Activated B cell treated with CpG ODN at 0.5 μM for 24 hours (primary cell): ENCODE measurements at regions of chr11 and their contacts with region 1.

Region 1: DNA sequence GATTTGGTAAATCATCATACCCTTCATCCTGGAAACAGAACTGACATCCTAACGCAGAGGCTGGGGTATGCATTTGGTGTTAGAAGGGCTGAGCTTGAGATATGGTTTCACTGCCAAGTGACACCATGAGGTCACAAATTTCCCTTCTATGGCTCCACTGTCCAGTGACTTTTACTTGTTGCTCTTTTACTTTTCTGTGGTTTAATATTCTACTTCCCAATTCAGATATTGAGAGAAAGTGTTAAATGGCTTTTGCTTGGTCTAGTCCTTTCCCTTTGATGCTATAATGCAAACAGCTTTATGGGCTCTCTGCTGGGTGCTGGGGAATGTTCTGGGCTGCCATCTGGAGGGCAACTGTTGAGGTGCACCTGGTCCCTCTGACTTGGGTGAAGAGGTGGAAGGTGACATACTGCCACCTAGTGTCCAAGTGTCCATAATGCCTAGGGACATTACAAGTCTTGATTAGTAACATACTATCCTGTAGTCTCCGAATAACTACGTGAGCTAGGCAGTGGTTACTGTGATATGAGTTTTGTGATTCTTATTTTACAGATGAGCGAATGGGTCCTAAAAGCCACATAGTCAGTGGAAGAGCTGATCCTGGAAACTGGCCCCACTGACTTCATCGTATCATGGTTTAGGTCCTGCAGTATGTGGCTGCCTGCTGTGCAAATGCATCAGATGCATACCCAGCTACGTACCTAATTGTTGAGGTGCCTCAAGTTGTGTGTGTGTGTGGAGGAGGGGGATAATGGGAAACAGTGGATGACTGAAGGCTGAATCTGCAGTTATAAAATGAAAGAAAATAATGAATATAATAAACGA is 149.1 kb upstream of the RAG2 start:
- DNase-seq: peak; percentile 34
- ATAC-seq: peak; percentile 100
- H3K4me3 Mint-ChIP-seq: no peak overlapping the region
- H3K27ac Mint-ChIP-seq: no peak overlapping the region
- H3K4me1 Mint-ChIP-seq: peaks cover 5% of the 10 kb centered on the region
- H3K27me3 Mint-ChIP-seq: peaks cover 10% of the 10 kb centered on the region
- CTCF ChIP-seq: peak; percentile 91

Region 2: GRCh38 chr11:36509694-36510566 is 237.2 kb before region 1 on chr11 and contains the start of gene TRAF6:
- CTCF ChIA-PET with region 1: interaction called, 4 read pairs
- POLR2A ChIA-PET with region 1: no interaction called
- intact Hi-C with region 1: loop called (anchors 1 kb)
- DNase-seq: peak; percentile 92
- ATAC-seq: peak; percentile 95
- H3K4me3 Mint-ChIP-seq: peak within 1 kb of the TSS; percentile 97
- H3K27ac Mint-ChIP-seq: peak within 1 kb of the TSS; percentile 91
- H3K4me1 Mint-ChIP-seq: peaks cover 19% of the 10 kb centered on the region
- H3K27me3 Mint-ChIP-seq: peaks cover 9% of the 10 kb centered on the region
- CTCF ChIP-seq: peak; percentile 72
- total RNA-seq, gene TRAF6: 16.9 and 19.3 TPM in 2 replicates

Region 3: GRCh38 chr11:36564376-36565030 is 182.6 kb before region 1 on chr11:
- CTCF ChIA-PET with region 1: interaction called, 27 read pairs
- POLR2A ChIA-PET with region 1: no interaction called
- intact Hi-C with region 1: loop called (anchors 1 kb)
- DNase-seq: no peak
- ATAC-seq: no peak
- H3K4me3 Mint-ChIP-seq: peak overlapping the region; percentile 57
- H3K27ac Mint-ChIP-seq: no peak overlapping the region
- H3K4me1 Mint-ChIP-seq: peaks cover 6% of the 10 kb centered on the region
- H3K27me3 Mint-ChIP-seq: peaks cover 41% of the 10 kb centered on the region
- CTCF ChIP-seq: no peak

Region 4: GRCh38 chr11:36619502-36619901 is 127.6 kb before region 1 on chr11:
- CTCF ChIA-PET with region 1: no interaction called
- POLR2A ChIA-PET with region 1: no interaction called
- intact Hi-C with region 1: no loop called
- DNase-seq: no peak
- ATAC-seq: no peak
- H3K4me3 Mint-ChIP-seq: no peak overlapping the region
- H3K27ac Mint-ChIP-seq: no peak overlapping the region
- H3K4me1 Mint-ChIP-seq: peaks cover 11% of the 10 kb centered on the region
- H3K27me3 Mint-ChIP-seq: peaks cover 17% of the 10 kb centered on the region
- CTCF ChIP-seq: no peak

Region 5: DNA sequence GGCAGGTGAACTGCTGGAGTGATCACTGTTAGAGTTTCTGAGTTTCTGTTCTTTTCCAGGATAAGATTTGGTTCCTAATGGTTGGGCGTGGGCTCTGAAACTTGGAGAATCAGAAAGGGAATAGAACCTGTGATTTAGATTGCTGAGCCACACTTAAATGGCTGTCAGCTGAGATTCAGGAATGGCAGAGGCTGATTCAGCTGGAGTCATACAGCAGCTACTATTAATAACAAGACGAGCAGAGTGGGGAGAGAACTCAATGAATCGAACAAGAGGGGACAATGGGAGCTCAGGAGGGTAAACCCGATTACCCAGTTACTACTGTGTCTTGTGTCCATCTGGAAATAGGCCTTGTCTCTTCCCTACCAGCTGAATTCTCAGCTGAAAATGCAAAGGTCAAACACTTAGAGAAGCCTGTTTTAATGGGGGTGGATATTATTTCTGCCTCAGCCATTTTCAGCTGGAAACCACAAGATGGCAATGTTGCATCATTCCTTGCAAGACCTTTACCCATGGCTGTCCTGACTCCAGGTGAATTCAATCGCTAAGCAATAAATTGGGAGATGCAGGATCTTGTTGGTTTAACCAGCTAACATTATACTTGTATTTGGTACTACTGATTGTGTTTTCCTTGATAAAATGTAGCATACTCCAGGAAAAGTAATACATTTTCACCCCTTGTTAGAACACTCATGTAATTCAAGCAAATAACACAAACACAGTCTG is 44.6 kb before region 1 on chr11:
- CTCF ChIA-PET with region 1: interaction called, 46 read pairs
- POLR2A ChIA-PET with region 1: no interaction called
- intact Hi-C with region 1: loop called (anchors 1 kb)
- DNase-seq: no peak
- ATAC-seq: peak; percentile 21
- H3K4me3 Mint-ChIP-seq: no peak overlapping the region
- H3K27ac Mint-ChIP-seq: no peak overlapping the region
- H3K4me1 Mint-ChIP-seq: no peaks in the 10 kb centered on the region
- H3K27me3 Mint-ChIP-seq: no peaks in the 10 kb centered on the region
- CTCF ChIP-seq: no peak

Region 6: GRCh38 chr11:36722421-36722820 is 24.7 kb before region 1 on chr11:
- CTCF ChIA-PET with region 1: interaction called, 8 read pairs
- POLR2A ChIA-PET with region 1: no interaction called
- intact Hi-C with region 1: loop called (anchors 2 kb)
- DNase-seq: no peak
- ATAC-seq: no peak
- H3K4me3 Mint-ChIP-seq: no peak overlapping the region
- H3K27ac Mint-ChIP-seq: no peak overlapping the region
- H3K4me1 Mint-ChIP-seq: peaks cover 10% of the 10 kb centered on the region
- H3K27me3 Mint-ChIP-seq: no peaks in the 10 kb centered on the region
- CTCF ChIP-seq: no peak

Region 7: DNA sequence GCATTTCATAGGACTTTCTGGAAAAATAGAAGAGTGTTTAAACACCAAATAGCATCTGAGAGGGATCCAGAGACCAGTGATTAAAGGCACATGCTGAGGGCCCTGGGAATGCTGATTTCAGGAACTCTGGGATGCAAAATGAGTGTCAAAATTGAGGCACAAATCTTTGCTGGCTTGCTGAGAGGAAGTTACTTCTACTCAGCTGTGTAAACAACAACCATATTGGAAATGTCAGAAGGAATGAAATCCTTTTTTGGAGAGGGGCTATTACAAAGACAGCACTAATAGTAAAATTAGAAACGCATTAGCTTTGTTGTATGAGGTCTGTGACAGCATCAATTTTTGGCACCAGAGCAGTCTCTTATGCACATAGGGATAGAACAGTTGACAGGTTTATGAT is 118.7 kb after region 1 on chr11:
- CTCF ChIA-PET with region 1: no interaction called
- POLR2A ChIA-PET with region 1: no interaction called
- intact Hi-C with region 1: no loop called
- DNase-seq: no peak
- ATAC-seq: no peak
- H3K4me3 Mint-ChIP-seq: no peak overlapping the region
- H3K27ac Mint-ChIP-seq: no peak overlapping the region
- H3K4me1 Mint-ChIP-seq: no peaks in the 10 kb centered on the region
- H3K27me3 Mint-ChIP-seq: no peaks in the 10 kb centered on the region
- CTCF ChIP-seq: no peak